T-cell (primary cell): ENCODE measurements at regions of chr18 and their contacts with region 1.

Region 1: DNA sequence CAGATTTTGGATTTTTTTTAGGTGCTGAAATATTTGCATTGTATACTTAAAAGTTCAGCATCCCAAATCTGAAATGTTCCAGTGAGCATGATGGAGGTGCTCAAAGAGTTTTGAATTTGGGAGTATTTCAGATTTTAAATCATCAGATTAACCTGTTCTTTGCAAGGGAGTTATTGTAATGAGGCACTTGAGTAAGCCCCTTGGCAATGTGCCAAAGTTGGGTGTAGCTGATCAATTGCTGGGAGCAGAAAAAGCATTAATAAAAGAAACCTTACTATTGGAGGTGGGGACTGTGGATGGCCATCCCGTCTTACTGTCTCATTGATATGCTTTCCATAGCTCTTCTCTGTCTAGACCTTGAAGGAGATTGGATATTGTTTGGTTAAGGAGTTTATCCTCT is 28.3 kb downstream of the MALT1 start:
- DNase-seq: peak in 1 of 35 experiments; percentile 44
- ATAC-seq: no peak
- H3K4me3 ChIP-seq: no peak overlapping the region
- H3K4me3 Mint-ChIP-seq: no peak overlapping the region
- H3K27ac ChIP-seq: no peak overlapping the region
- H3K27ac Mint-ChIP-seq: no peak overlapping the region
- H3K4me1 ChIP-seq: peaks cover 13 to 22% of the 10 kb centered on the region in 2 experiments
- H3K4me1 Mint-ChIP-seq: peaks cover 33 to 44% (median 43%) of the 10 kb centered on the region in 3 donors
- H3K27me3 ChIP-seq: no peaks in the 10 kb centered on the region
- H3K27me3 Mint-ChIP-seq: no peaks in the 10 kb centered on the region

Region 2: DNA sequence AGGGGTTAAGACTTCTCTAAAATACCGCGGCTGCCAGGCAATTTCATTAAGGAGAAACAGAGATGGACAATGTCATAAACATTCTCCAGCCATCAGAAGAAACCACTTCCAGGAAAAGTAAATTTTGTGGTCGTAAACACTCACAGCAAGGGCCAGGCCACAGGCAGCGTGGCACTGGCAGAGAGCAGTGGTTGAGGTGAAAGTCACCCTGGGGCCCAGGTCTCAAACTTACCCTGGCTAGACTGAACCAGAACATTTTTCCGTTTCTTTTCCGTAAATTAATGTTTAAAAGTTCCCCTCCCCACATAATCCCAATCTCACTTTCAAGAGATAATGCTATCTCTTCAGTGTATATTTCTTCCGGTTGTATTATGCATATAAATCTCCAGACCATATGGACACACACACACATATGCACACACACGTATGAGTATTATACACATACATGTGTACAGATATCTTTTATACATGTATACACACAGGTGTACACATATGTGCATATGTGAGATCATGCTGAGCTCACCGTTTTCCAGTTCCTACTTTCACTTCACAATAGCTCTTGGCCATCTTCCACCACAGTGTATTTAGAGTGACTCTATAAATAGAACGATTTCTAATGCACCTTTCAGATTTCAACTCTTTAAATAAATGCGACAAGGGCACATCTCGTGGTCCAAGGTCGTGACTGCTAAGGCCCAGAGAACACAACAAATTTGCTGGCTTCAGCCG is 61.9 kb after region 1 on chr18:
- CTCF ChIA-PET with region 1: interaction called in 1 of 2 experiments, 3 read pairs
- POLR2A ChIA-PET with region 1: interaction called in 1 of 2 experiments, 11 read pairs
- DNase-seq: no peak
- ATAC-seq: peak in 1 of 4 experiments; percentile 34
- H3K4me3 ChIP-seq: no peak overlapping the region
- H3K4me3 Mint-ChIP-seq: no peak overlapping the region
- H3K27ac ChIP-seq: no peak overlapping the region
- H3K27ac Mint-ChIP-seq: no peak overlapping the region
- H3K4me1 ChIP-seq: peaks cover 5 to 24% of the 10 kb centered on the region in 2 experiments
- H3K4me1 Mint-ChIP-seq: peaks cover 27 to 44% (median 43%) of the 10 kb centered on the region in 3 donors
- H3K27me3 ChIP-seq: peaks cover 0 to 23% of the 10 kb centered on the region in 2 experiments
- H3K27me3 Mint-ChIP-seq: peaks cover 20% of the 10 kb centered on the region in 2 donors

Region 3: DNA sequence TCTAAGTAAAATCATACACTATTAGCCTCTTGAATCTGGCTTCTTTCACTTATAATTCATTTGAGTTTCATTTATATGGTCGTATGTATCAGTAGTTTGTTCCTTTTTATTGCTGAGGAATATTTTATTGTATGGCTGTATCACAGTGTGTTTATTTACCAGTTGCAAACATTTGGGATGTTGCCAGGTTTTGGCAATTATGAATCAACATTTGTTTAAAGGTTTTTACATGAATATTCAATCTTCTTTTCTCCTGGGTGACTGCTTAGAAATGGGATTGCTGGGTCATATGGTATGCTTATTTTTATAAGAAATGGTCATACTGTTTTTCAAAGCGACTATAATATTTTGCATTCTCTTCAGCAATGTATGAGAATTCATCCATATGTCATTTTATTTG is 1308.1 kb after region 1 on chr18:
- CTCF ChIA-PET with region 1: no interaction called
- POLR2A ChIA-PET with region 1: no interaction called
- DNase-seq: no peak
- ATAC-seq: no peak
- H3K4me3 ChIP-seq: no peak overlapping the region
- H3K4me3 Mint-ChIP-seq: no peak overlapping the region
- H3K27ac ChIP-seq: no peak overlapping the region
- H3K27ac Mint-ChIP-seq: no peak overlapping the region
- H3K4me1 ChIP-seq: no peaks in the 10 kb centered on the region
- H3K4me1 Mint-ChIP-seq: no peaks in the 10 kb centered on the region
- H3K27me3 ChIP-seq: peaks cover 0 to 16% of the 10 kb centered on the region in 2 experiments
- H3K27me3 Mint-ChIP-seq: peaks cover 4 to 25% of the 10 kb centered on the region in 2 donors